CD8-positive, alpha-beta T cell (primary cell): ENCODE measurements at regions of chr2 and their contacts with region 1.

Region 1: GRCh38 chr2:96801005-96801785 is 14.9 kb upstream of the CNNM3 start:
- DNase-seq: peak; percentile 44 to 83 (median 72)
- ATAC-seq: peak; percentile 100
- H3K4me3 ChIP-seq: no peak overlapping the region
- H3K4me3 Mint-ChIP-seq: no peak overlapping the region
- H3K27ac ChIP-seq: no peak overlapping the region
- H3K27ac Mint-ChIP-seq: no peak overlapping the region
- H3K4me1 ChIP-seq: peaks cover 6% of the 10 kb centered on the region
- H3K4me1 Mint-ChIP-seq: peaks cover 5% of the 10 kb centered on the region
- H3K27me3 ChIP-seq: no peaks in the 10 kb centered on the region
- H3K27me3 Mint-ChIP-seq: no peaks in the 10 kb centered on the region
- CTCF ChIP-seq: peak; percentile 64

Region 2: DNA sequence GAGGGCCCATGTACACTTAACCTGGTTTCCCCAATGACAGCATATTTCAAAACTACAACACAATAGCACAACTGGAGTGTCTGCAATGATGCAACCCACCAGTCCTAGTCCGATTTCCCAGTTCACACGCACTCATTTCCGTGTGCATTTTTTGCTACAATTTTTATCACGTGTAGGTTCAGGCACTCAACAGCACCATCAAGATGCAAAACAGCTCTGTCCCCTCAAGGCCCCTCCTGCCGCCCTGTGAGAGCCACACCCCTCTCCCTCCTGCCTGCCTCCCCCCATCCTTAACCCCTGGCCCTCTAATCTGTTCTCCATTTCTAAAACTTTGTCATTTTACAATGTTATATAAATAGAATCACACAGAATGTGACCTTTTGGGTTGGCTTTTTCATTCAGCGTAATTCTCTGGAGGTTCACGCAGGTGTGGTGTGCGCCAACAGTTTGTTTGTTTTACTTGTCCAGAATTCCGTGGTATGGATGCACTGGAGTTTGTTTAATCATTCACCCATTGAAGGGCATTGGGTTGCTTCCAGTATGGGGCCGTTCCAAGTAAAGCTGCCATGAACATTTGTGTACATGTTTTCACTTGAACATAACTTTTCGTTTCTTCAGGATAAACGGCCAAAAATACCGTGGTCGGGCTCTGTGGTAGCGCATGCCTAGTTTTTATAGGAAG is 1495.7 kb before region 1 on chr2:
- CTCF ChIA-PET with region 1: no interaction called
- POLR2A ChIA-PET with region 1: no interaction called
- intact Hi-C with region 1: no loop called
- DNase-seq: no peak
- ATAC-seq: no peak
- H3K4me3 ChIP-seq: no peak overlapping the region
- H3K4me3 Mint-ChIP-seq: no peak overlapping the region
- H3K27ac ChIP-seq: no peak overlapping the region
- H3K27ac Mint-ChIP-seq: no peak overlapping the region
- H3K4me1 ChIP-seq: no peaks in the 10 kb centered on the region
- H3K4me1 Mint-ChIP-seq: no peaks in the 10 kb centered on the region
- H3K27me3 ChIP-seq: no peaks in the 10 kb centered on the region
- H3K27me3 Mint-ChIP-seq: no peaks in the 10 kb centered on the region
- CTCF ChIP-seq: no peak

Region 3: DNA sequence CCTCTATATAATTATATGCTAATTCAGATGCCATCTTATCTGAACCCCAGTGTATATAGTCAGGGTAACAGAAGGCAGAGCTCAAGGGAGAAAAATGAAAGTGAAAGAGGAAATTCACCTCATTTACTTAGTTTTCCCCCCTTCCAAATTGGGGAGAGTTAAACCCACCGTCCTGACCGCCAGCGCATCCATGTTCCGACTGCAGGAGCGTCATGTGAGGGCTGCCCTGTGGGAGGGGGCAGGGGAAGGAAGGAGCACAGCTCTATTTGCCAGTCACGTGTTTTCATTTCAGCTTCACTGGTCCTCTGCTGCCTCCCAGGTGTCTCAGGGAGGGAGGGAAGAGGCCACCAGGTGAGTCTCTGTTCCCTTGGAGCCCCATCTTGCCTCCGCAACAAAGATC is 27.3 kb before region 1 on chr2:
- CTCF ChIA-PET with region 1: interaction called, 10 read pairs
- POLR2A ChIA-PET with region 1: interaction called, 4 read pairs
- intact Hi-C with region 1: no loop called
- DNase-seq: peak in 8 of 9 experiments; percentile 28 to 84 (median 56)
- ATAC-seq: peak; percentile 81
- H3K4me3 ChIP-seq: peak overlapping the region; percentile 60 to 67
- H3K4me3 Mint-ChIP-seq: peak overlapping the region; percentile 94
- H3K27ac ChIP-seq: peak overlapping the region; percentile 32 to 78
- H3K27ac Mint-ChIP-seq: peak overlapping the region; percentile 94
- H3K4me1 ChIP-seq: peaks cover 19% of the 10 kb centered on the region
- H3K4me1 Mint-ChIP-seq: peaks cover 26% of the 10 kb centered on the region
- H3K27me3 ChIP-seq: no peaks in the 10 kb centered on the region
- H3K27me3 Mint-ChIP-seq: no peaks in the 10 kb centered on the region
- CTCF ChIP-seq: no peak